ENCODE measurements at regions of chr6 and their contacts with region 1.

Region 1: DNA sequence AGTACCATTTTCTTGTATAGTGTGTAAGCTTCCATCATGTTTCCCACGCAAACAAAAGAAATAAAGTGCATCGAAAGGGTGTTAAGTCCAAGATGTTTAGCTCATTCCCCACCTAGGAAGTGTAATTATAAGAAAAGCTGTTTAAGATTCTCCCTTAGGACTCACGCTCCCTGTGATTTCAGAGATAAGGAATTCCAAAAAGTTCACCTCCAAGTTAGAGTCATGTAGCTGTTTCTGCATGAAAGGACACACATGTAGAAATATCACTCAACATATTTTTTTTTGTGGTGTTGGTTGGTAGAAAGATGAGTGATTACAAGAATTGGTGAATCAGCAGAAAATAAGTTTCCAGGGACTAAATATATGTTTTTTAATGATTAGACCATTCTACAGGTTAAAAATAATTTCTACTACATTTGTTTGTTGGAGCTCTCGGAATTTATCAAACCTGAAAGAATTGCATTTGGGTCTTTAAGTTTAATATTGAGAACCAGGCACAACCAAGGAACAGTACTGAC is 10.4 kb downstream of the OPN5 start:
- DNase-seq: no peak

Region 2: DNA sequence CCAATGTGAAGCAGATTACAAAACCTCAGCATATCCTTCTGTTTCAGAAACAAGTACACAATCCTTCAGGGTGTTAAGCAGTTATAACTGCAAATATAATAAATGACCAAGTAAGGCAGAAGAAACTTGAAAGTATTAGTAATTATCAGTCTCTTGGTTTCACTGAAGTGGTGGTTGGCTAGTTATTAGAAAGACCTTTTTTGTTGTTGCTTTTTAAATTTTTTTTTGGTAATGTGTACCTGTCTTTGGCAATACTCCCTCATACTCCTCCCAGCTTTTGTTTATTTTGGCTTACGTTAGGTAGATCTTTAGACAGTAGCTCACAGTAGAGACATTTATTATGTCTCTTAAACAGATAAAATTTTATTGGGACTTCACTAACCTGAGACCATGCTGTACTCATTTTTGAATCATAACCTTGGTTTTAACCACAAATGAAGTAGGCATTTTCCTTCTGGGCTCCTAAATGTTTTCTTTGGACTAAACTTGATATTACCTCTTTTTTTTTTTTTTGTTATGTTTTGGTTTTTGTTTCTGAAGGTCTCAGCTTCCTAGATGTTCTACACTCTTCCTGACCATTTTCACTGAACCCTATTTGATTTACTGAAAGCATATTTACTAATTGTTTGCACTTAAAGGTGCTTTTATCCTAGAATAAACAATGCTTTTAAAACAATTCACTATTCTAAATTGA is 308.3 kb before region 1 on chr6:
- in situ Hi-C with region 1: no loop called
- DNase-seq: no peak

Region 3: GRCh38 chr6:47944846-47945245 is 152.6 kb after region 1 on chr6:
- in situ Hi-C with region 1: loop called (anchors 10 kb)
- DNase-seq: no peak